ENCODE measurements at regions of chr6 and their contacts with region 1.

Region 1: GRCh38 chr6:110285306-110286060 is 72.7 kb downstream of the METTL24 start:
- DNase-seq: no peak
- H3K4me3 ChIP-seq: no peak overlapping the region
- H3K27ac ChIP-seq: peak overlapping the region in 58 of 59 donors; percentile 9 to 93 (median 81)
- H3K27me3 ChIP-seq: no peaks in the 10 kb centered on the region
- CTCF ChIP-seq: no peak

Region 2: GRCh38 chr6:110325197-110325596 is 39.7 kb after region 1 on chr6:
- intact Hi-C with region 1: no loop called
- DNase-seq: no peak
- H3K4me3 ChIP-seq: no peak overlapping the region
- H3K27ac ChIP-seq: peak overlapping the region in 56 of 59 donors; percentile 7 to 92 (median 76)
- H3K27me3 ChIP-seq: no peaks in the 10 kb centered on the region
- CTCF ChIP-seq: no peak

Region 3: DNA sequence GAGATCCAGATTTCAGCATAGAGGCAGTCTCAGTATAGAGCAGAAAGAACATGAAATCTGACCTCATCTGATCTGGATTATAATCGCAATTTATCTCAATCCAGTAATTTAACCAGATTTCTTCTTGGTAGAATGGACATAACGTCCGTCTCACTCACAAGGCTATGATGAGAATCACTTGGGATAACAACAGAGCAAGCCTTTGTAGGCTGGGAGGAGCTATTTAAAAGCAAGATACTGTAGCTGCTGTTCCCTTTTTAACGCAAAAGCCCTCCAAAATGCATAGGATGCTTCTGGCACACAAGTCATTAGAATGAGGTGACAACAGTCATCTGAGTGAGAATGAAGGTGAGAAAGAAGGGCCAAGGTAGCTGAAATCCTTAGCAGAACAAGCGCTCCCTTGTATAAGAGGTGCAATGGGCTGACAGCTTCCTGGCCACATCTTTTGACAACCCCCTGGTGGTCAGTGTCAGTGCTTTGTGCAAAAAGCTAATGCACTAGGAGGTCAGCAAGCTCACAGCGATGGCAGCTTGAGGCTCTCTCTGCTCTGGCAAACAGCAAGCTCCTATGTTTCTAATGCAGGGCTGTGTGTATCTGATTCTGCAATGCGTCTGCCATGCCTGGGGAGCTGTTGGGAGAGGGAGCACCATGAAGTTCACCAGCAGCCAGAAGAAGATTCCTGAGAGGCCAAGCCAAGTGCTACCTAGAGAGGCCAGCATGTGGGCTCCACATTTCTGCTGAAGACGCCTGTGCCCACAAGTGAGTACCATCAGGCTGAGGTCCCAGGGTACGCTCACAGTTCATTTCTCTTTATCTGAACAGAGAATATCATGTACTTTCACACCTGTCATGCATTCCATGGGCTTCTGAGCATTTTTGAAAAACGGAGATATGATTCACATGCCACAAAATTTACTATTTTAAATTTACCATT is 56.4 kb after region 1 on chr6:
- intact Hi-C with region 1: loop called in 1 of 2 experiments (anchors 10 kb)
- DNase-seq: peak in 2 of 10 donors; percentile 31 to 65
- H3K4me3 ChIP-seq: no peak overlapping the region
- H3K27ac ChIP-seq: peak overlapping the region in 58 of 59 donors; percentile 27 to 93 (median 75)
- H3K27me3 ChIP-seq: no peaks in the 10 kb centered on the region
- CTCF ChIP-seq: peak in 25 of 56 donors; percentile 10 to 44 (median 22)

Region 4: GRCh38 chr6:111171577-111172400 is 886.3 kb after region 1 on chr6:
- intact Hi-C with region 1: no loop called
- DNase-seq: no peak
- H3K4me3 ChIP-seq: no peak overlapping the region
- H3K27ac ChIP-seq: no peak overlapping the region
- H3K27me3 ChIP-seq: no peaks in the 10 kb centered on the region
- CTCF ChIP-seq: no peak

Measured in dorsolateral prefrontal cortex (tissue), 120 donors.